Calu3 (cell line): ENCODE measurements at regions of chr7 and their contacts with region 1.

Region 1: DNA sequence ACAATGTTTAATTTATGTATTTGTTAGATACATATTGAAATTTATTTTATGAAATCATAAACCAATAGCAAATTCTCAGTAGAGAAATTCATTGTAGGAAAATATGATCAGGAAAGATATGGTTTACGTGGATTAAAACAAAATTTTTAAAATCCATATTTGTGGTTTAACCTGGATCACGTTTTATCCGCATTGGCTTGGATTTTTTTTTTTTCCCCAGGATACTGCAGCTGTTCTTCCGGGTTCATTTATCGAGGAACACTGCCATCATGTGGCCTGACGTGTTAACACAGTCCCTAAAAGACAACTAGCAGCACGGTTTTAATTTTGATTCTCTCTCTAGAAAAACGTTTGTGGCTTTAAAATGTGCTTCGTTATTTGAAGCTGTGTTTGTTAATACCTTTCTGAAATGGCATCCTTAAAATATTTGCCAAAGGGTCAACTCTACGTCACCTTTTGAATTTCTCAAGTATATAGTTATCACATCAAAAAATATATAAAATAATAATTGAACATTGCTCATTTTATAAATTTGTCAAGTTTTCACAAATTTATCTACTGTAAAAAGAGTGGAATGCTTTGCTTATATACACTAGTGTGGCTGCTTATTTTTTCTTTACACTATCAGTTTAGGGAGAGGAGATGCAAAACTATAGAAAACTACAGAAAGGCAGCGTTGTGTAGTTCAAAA is 8.7 kb upstream of the ASB4 start:
- DNase-seq: peak; percentile 40
- H3K4me3 Mint-ChIP-seq: no peak overlapping the region
- H3K27ac Mint-ChIP-seq: no peak overlapping the region
- H3K4me1 Mint-ChIP-seq: no peaks in the 10 kb centered on the region
- H3K27me3 Mint-ChIP-seq: no peaks in the 10 kb centered on the region
- CTCF ChIP-seq: peak; percentile 31

Region 2: DNA sequence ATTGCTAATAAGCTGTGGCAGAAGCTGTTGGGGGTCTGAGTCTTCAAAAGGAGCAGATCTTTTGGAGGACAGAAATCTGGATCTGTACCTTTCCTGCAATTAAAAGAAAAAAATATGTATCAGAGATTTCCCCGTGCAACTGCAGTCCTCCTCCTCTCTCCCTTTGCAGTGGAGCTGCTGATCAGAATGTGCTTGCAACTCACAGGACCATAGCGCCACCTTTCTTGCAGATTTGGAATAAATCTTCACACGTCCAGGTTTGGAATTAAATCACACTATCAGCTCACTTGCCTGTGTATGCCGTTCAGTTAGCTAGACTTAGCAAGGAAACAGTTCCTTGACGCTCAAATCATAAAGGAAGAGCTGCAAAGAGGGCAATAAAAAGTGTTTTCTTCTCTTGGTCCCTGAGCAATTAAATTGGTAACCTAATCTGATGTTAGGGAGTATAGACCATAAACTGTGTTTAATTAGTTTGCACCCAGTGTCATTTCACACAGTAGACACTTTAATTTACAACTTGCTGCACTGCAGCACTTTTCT is 230.1 kb before region 1 on chr7:
- CTCF ChIA-PET with region 1: no interaction called
- intact Hi-C with region 1: loop called (anchors 10 kb)
- DNase-seq: peak; percentile 43
- H3K4me3 Mint-ChIP-seq: no peak overlapping the region
- H3K27ac Mint-ChIP-seq: no peak overlapping the region
- H3K4me1 Mint-ChIP-seq: no peaks in the 10 kb centered on the region
- H3K27me3 Mint-ChIP-seq: no peaks in the 10 kb centered on the region
- CTCF ChIP-seq: peak; percentile 62

Region 3: GRCh38 chr7:95396136-95397032 is 80.7 kb before region 1 on chr7 and contains the start of gene PON3:
- CTCF ChIA-PET with region 1: interaction called, 27 read pairs
- intact Hi-C with region 1: loop called (anchors 2 kb)
- DNase-seq: peak; percentile 58
- H3K4me3 Mint-ChIP-seq: peak within 1 kb of the TSS; percentile 85
- H3K27ac Mint-ChIP-seq: peak within 1 kb of the TSS; percentile 77
- H3K4me1 Mint-ChIP-seq: peaks cover 35% of the 10 kb centered on the region
- H3K27me3 Mint-ChIP-seq: no peaks in the 10 kb centered on the region
- CTCF ChIP-seq: peak; percentile 60
- total RNA-seq, gene PON3: 5.3 and 6.5 TPM in 2 replicates